Naive thymus-derived CD4-positive, alpha-beta T cell (primary cell): ENCODE measurements at regions of chr10 and their contacts with region 1.

Region 1: GRCh38 chr10:32279795-32280194 is 67.2 kb downstream of the EPC1 start:
- DNase-seq: no peak
- ATAC-seq: no peak
- H3K4me3 ChIP-seq: no peak overlapping the region
- H3K4me3 Mint-ChIP-seq: no peak overlapping the region
- H3K27ac ChIP-seq: no peak overlapping the region
- H3K27ac Mint-ChIP-seq: peak overlapping the region in 5 of 9 donors; percentile 18 to 73 (median 33)
- H3K4me1 ChIP-seq: no peaks in the 10 kb centered on the region
- H3K4me1 Mint-ChIP-seq: peaks cover 5 to 26% (median 8%) of the 10 kb centered on the region in 7 donors
- H3K27me3 ChIP-seq: no peaks in the 10 kb centered on the region
- H3K27me3 Mint-ChIP-seq: no peaks in the 10 kb centered on the region

Region 2: GRCh38 chr10:32017021-32017420 is 262.8 kb before region 1 on chr10:
- CTCF ChIA-PET with region 1: no interaction called
- POLR2A ChIA-PET with region 1: no interaction called
- intact Hi-C with region 1: loop called in 1 of 2 experiments (anchors 10 kb)
- DNase-seq: no peak
- ATAC-seq: no peak
- H3K4me3 ChIP-seq: no peak overlapping the region
- H3K4me3 Mint-ChIP-seq: no peak overlapping the region
- H3K27ac ChIP-seq: no peak overlapping the region
- H3K27ac Mint-ChIP-seq: peak overlapping the region in 2 of 9 donors; percentile 15 to 47
- H3K4me1 ChIP-seq: no peaks in the 10 kb centered on the region
- H3K4me1 Mint-ChIP-seq: peaks cover 0 to 8% (median 2%) of the 10 kb centered on the region in 7 donors
- H3K27me3 ChIP-seq: no peaks in the 10 kb centered on the region
- H3K27me3 Mint-ChIP-seq: no peaks in the 10 kb centered on the region

Region 3: GRCh38 chr10:32413513-32413912 is 133.7 kb after region 1 on chr10:
- CTCF ChIA-PET with region 1: no interaction called
- POLR2A ChIA-PET with region 1: no interaction called
- intact Hi-C with region 1: no loop called
- DNase-seq: peak in 1 of 9 donors; percentile 25
- ATAC-seq: no peak
- H3K4me3 ChIP-seq: no peak overlapping the region
- H3K4me3 Mint-ChIP-seq: no peak overlapping the region
- H3K27ac ChIP-seq: no peak overlapping the region
- H3K27ac Mint-ChIP-seq: peak overlapping the region in 1 of 9 donors; percentile 33
- H3K4me1 ChIP-seq: no peaks in the 10 kb centered on the region
- H3K4me1 Mint-ChIP-seq: peaks cover 0 to 4% (median 0%) of the 10 kb centered on the region in 7 donors
- H3K27me3 ChIP-seq: no peaks in the 10 kb centered on the region
- H3K27me3 Mint-ChIP-seq: peaks cover 0 to 6% (median 3%) of the 10 kb centered on the region in 5 donors

Region 4: GRCh38 chr10:33211106-33211878 is 931.5 kb after region 1 on chr10:
- CTCF ChIA-PET with region 1: no interaction called
- POLR2A ChIA-PET with region 1: no interaction called
- intact Hi-C with region 1: no loop called
- DNase-seq: peak in 6 of 9 donors; percentile 25 to 59 (median 38)
- ATAC-seq: peak; percentile 68
- H3K4me3 ChIP-seq: no peak overlapping the region
- H3K4me3 Mint-ChIP-seq: peak overlapping the region; percentile 45 to 77 (median 65)
- H3K27ac ChIP-seq: no peak overlapping the region
- H3K27ac Mint-ChIP-seq: peak overlapping the region; percentile 77 to 96 (median 91)
- H3K4me1 ChIP-seq: no peaks in the 10 kb centered on the region
- H3K4me1 Mint-ChIP-seq: peaks cover 12 to 40% (median 30%) of the 10 kb centered on the region in 7 donors
- H3K27me3 ChIP-seq: no peaks in the 10 kb centered on the region
- H3K27me3 Mint-ChIP-seq: peaks cover 0 to 2% (median 0%) of the 10 kb centered on the region in 5 donors